ENCODE measurements at regions of chr10 and their contacts with region 1.

Region 1: GRCh38 chr10:101050208-101051069 is 11.3 kb upstream of the KAZALD1 start:
- DNase-seq: peak; percentile 75
- H3K4me3 ChIP-seq: peak overlapping the region; percentile 29
- H3K27ac ChIP-seq: no peak overlapping the region
- H3K4me1 ChIP-seq: peaks cover 24% of the 10 kb centered on the region
- H3K27me3 ChIP-seq: no peaks in the 10 kb centered on the region
- CTCF ChIP-seq: peak; percentile 95

Region 2: GRCh38 chr10:101067356-101068083 is 17.1 kb after region 1 on chr10:
- CTCF ChIA-PET with region 1: interaction called, 16 read pairs
- POLR2A ChIA-PET with region 1: interaction called, 5 read pairs
- intact Hi-C with region 1: loop called (anchors 2 kb)
- DNase-seq: peak; percentile 91
- H3K4me3 ChIP-seq: peak overlapping the region; percentile 58
- H3K27ac ChIP-seq: peak overlapping the region; percentile 73
- H3K4me1 ChIP-seq: peaks cover 42% of the 10 kb centered on the region
- H3K27me3 ChIP-seq: no peaks in the 10 kb centered on the region
- CTCF ChIP-seq: peak; percentile 81

Region 3: DNA sequence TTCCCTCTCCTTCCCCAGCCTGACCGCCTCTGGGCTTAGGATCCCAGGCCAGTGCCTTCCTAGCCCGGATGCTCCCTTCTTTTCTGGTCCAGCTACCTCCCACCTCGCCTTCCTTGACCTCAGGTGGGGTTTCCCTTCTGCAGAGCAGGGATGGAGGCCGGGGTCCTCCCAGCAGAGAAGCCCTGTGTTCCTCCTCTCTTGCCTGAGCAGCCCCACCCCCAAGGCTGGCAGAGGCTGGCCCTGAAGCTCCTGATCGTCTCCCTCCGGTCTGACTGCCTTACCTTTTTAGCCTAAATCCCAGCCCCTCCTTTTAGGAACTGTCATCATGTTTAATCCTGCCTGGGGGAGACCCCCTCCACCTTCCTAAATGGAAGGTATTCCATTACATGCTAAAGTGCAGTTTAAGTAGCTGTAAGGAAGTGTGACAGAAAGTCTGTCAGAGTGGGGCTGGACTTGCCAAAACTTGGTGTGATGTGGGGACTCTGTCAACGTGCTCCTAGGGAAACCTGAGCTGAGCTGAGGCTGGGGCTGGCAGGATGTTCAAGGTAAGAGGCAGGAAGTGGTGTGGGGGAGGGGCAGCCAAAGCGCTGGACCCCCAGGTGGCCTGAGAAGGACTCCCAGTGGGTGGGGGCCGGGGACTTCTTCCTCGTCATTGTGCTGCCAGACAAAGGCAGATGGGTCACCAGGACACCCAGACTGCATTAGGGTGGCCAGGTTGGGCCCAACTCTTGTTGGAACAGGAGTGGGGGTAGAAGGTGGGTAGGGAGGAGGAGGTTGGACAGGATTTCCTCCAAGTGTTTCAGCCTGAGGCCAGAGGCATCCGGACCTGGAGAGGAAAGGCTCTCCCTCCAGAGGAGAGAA is 139.3 kb after region 1 on chr10:
- CTCF ChIA-PET with region 1: no interaction called
- POLR2A ChIA-PET with region 1: no interaction called
- intact Hi-C with region 1: no loop called
- DNase-seq: no peak
- H3K4me3 ChIP-seq: no peak overlapping the region
- H3K27ac ChIP-seq: no peak overlapping the region
- H3K4me1 ChIP-seq: no peaks in the 10 kb centered on the region
- H3K27me3 ChIP-seq: no peaks in the 10 kb centered on the region
- CTCF ChIP-seq: no peak

Measured in A673 (cell line).